WTC11 (cell line): ENCODE measurements at regions of chr15 and their contacts with region 1.

Region 1: DNA sequence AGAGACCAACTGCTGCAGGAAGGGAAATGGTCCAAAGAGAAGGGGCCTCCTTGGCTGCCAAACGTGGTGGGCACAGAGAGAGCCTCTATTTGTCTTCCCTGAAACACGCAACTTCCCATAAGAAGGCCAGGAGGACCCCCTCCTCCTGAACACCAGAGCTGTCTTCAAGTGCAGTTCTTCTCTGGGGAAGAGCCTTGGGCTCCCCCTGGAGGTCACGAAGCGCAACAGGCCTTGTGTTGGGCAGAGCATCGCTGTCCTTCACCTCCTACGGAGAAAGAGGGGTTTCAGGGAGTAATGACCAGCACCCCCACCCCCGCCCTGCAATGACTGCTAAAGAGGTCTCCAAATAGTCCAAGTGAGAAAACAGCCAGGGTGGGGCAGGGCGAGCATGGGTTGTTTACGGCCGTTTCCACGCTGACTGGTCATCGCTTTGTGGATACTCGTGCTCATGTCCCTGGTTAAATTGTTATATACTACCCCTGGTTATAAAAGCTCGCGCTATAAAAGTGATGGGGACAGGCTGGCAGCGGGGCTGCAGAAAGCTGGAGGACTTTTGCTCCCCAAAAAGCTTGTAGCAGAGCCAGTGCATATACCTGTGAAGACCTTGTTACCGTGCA is 397.5 kb upstream of the ATP10A start:
- DNase-seq: peak; percentile 71
- ATAC-seq: peak; percentile 98
- H3K4me3 Mint-ChIP-seq: no peak overlapping the region
- H3K27ac Mint-ChIP-seq: no peak overlapping the region
- H3K4me1 Mint-ChIP-seq: peaks cover 20% of the 10 kb centered on the region
- H3K27me3 Mint-ChIP-seq: no peaks in the 10 kb centered on the region
- CTCF ChIP-seq: peak; percentile 81

Region 2: GRCh38 chr15:25947323-25948314 is 313.0 kb before region 1 on chr15:
- CTCF ChIA-PET with region 1: interaction called, 12 read pairs
- POLR2A ChIA-PET with region 1: no interaction called
- DNase-seq: peak; percentile 51
- ATAC-seq: no peak
- H3K4me3 Mint-ChIP-seq: peak overlapping the region; percentile 25; the same call in 1 of the 2 replicates
- H3K27ac Mint-ChIP-seq: peak overlapping the region; percentile 60; the same call in 1 of the 2 replicates
- H3K4me1 Mint-ChIP-seq: peaks cover 15% of the 10 kb centered on the region
- H3K27me3 Mint-ChIP-seq: no peaks in the 10 kb centered on the region
- CTCF ChIP-seq: no peak

Region 3: DNA sequence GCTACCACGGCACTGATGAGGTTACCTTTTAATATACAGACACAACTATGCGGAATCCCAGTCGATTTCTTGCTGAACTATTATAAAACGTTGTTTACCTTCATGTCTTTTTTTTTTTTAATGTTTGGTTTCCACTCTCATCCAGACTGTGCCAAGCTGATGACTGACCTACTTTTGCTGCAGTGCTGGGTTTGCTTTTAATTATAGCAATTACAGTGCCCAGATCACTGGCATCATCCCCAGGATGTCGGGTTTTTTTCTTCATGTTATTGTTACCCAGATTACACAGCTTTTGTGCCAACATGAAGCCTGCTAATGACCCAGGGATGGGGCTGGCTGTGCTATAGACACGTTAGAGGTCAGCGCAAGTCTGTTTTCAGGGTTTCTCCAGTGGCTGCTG is 103.5 kb before region 1 on chr15:
- CTCF ChIA-PET with region 1: interaction called, 12 read pairs
- POLR2A ChIA-PET with region 1: no interaction called
- DNase-seq: no peak
- ATAC-seq: no peak
- H3K4me3 Mint-ChIP-seq: no peak overlapping the region
- H3K27ac Mint-ChIP-seq: no peak overlapping the region
- H3K4me1 Mint-ChIP-seq: peaks cover 2% of the 10 kb centered on the region; the same call in 1 of the 2 replicates
- H3K27me3 Mint-ChIP-seq: no peaks in the 10 kb centered on the region
- CTCF ChIP-seq: no peak

Region 4: GRCh38 chr15:26179906-26180305 is 80.7 kb before region 1 on chr15:
- CTCF ChIA-PET with region 1: interaction called, 50 read pairs
- POLR2A ChIA-PET with region 1: no interaction called
- DNase-seq: peak; percentile 76
- ATAC-seq: peak; percentile 99
- H3K4me3 Mint-ChIP-seq: no peak overlapping the region
- H3K27ac Mint-ChIP-seq: no peak overlapping the region
- H3K4me1 Mint-ChIP-seq: peaks cover 35% of the 10 kb centered on the region
- H3K27me3 Mint-ChIP-seq: no peaks in the 10 kb centered on the region
- CTCF ChIP-seq: no peak

Region 5: DNA sequence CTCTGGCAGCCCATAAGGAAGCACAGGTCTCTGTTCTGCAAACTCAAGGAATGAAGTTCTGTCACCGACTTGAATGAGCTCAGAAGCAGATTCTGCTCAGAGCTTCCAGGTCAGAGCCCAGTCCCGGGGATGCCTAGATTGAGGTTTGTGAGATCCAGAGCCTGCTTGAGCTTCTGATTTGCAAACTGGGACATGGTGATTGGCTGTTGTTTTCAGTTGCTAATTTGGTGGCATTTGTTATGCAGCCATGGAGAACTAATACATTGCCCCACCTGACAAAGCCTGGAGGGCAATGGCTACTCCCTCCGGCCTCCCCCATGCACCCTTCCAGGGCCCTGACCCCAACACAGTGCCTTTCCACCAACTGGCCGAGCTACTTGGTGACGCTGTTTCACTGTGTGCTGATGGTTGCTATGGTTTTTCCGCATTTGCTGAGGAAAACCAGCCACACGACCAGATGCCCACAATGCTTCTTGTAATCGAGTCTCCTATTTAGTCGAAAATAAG is 18.0 kb before region 1 on chr15:
- CTCF ChIA-PET with region 1: interaction called, 28 read pairs
- POLR2A ChIA-PET with region 1: no interaction called
- DNase-seq: peak; percentile 65
- ATAC-seq: peak; percentile 88
- H3K4me3 Mint-ChIP-seq: no peak overlapping the region
- H3K27ac Mint-ChIP-seq: peak overlapping the region; percentile 98
- H3K4me1 Mint-ChIP-seq: peaks cover 54% of the 10 kb centered on the region
- H3K27me3 Mint-ChIP-seq: no peaks in the 10 kb centered on the region; the same call in 1 of the 2 replicates
- CTCF ChIP-seq: no peak